ENCODE measurements at regions of chr18 and their contacts with region 1.

Region 1: DNA sequence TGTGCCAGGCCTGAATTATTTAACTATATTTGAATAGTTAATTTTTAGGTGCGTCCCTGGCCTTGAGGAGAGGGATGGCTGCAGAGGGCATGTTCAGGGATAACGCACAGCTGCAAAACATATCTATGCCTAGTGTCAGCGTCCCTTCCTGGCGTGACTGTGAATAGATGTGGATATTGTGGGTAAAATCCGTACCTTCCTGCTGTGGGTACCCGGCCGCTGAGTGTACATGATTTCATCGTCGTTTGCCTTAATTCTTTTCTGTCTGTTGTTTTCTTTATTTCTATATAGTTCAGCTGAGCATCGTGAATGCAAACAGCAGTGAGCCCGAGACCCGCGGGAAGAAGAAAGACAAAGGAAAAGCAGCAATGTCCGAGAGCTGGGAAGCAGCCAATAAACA is 25.0 kb upstream of the MC2R start:
- DNase-seq: no peak
- H3K4me3 ChIP-seq: no peak overlapping the region
- H3K27ac ChIP-seq: no peak overlapping the region
- H3K4me1 ChIP-seq: no peaks in the 10 kb centered on the region
- H3K27me3 ChIP-seq: no peaks in the 10 kb centered on the region
- CTCF ChIP-seq: no peak
- POLR2A ChIP-seq: no peak

Region 2: GRCh38 chr18:12862467-12862866 is 1077.9 kb before region 1 on chr18:
- intact Hi-C with region 1: no loop called
- DNase-seq: no peak
- H3K4me3 ChIP-seq: no peak overlapping the region
- H3K27ac ChIP-seq: peak overlapping the region in 2 of 8 donors; percentile 11 to 16
- H3K4me1 ChIP-seq: peaks cover 3 to 76% (median 41%) of the 10 kb centered on the region in 6 donors
- H3K27me3 ChIP-seq: no peaks in the 10 kb centered on the region
- CTCF ChIP-seq: no peak
- POLR2A ChIP-seq: no peak

Region 3: DNA sequence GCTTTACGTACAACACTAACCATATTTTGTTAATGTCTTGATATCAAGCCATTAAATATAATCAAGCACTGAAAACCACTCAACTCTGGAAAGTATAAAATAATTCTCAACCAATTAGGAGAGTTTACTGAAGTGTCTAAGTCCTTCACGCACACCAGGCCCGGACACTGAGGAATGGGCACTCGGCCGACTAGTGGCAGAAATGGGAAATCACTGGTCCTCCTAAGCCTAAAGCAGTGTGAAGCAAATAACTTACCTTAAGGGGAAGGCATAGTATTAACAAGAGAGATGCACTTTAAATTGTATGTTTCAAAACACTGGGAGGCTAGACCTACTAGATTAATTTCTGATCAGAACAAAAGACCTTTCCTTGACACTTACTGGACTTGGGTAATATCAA is 259.7 kb before region 1 on chr18:
- intact Hi-C with region 1: no loop called
- DNase-seq: no peak
- H3K4me3 ChIP-seq: no peak overlapping the region
- H3K27ac ChIP-seq: no peak overlapping the region
- H3K4me1 ChIP-seq: peaks cover 0 to 3% (median 0%) of the 10 kb centered on the region in 6 donors
- H3K27me3 ChIP-seq: no peaks in the 10 kb centered on the region
- CTCF ChIP-seq: peak in 5 of 11 experiments; percentile 13 to 39 (median 34)
- POLR2A ChIP-seq: no peak

Region 4: DNA sequence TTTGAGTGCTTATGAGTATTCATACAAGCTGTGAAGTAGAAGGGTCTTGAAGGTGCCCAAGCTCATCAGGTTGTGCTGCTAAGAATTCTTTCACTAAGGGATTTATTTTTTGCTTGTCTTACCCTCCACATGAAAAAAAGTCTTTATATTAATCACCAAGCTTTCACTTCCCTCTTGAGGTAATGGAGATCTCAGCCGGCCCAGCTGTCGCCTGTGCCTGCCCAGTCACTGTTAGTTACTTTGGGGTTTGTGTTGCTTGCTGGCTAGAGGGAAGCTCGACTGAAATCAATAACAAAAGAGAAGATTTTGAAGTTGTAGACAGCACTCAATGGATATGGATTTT is 46.9 kb before region 1 on chr18:
- intact Hi-C with region 1: loop called (anchors 5 kb)
- DNase-seq: no peak
- H3K4me3 ChIP-seq: peak overlapping the region in 1 of 8 donors; percentile 13
- H3K27ac ChIP-seq: no peak overlapping the region
- H3K4me1 ChIP-seq: no peaks in the 10 kb centered on the region
- H3K27me3 ChIP-seq: peaks cover 0 to 14% (median 0%) of the 10 kb centered on the region in 7 donors
- CTCF ChIP-seq: no peak
- POLR2A ChIP-seq: no peak

Measured in spleen (tissue), 13 donors.